Sigmoid colon (tissue), 7 donors: ENCODE measurements at regions of chr10 and their contacts with region 1.

Region 1: GRCh38 chr10:63465293-63466143 is at the start of gene JMJD1C:
- DNase-seq: peak; percentile 88
- H3K4me3 ChIP-seq: peak within 1 kb of the TSS; percentile 54 to 86 (median 76)
- H3K27ac ChIP-seq: peak within 1 kb of the TSS; percentile 89 to 96 (median 92)
- H3K4me1 ChIP-seq: peaks cover 0 to 23% (median 19%) of the 10 kb centered on the region in 4 donors
- H3K27me3 ChIP-seq: no peaks in the 10 kb centered on the region
- CTCF ChIP-seq: no peak
- EP300 ChIP-seq: no peak
- POLR2A ChIP-seq: peak; percentile 22 to 25
- total RNA-seq, gene JMJD1C: 94.2 to 134 (median 121) TPM

Region 2: DNA sequence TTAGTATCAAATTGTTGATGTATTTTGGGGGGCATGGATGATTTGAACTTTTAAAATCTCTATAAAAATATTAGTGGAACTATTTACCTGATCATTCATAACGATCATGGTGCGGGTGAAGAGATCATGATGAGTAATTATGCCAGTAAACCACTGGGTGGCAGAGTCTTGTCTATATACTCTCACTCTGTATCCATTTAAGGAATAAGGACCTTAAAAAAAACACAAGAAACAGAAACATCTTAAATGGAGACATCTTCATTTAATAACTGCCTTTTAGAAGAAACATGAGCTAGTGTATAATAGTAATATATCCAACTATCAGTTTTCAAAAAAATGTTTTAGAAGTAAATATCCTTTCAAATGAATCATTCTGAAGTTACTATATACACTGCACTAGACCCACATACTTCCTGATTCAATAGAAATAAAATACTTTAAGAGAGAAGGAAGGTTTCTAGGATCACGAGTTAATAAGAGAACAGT is 248.4 kb before region 1 on chr10:
- intact Hi-C with region 1: loop called (anchors 5 kb)
- DNase-seq: no peak
- H3K4me3 ChIP-seq: no peak overlapping the region
- H3K27ac ChIP-seq: peak overlapping the region in 3 of 4 donors; percentile 12 to 56 (median 56)
- H3K4me1 ChIP-seq: peaks cover 0 to 30% (median 13%) of the 10 kb centered on the region in 4 donors
- H3K27me3 ChIP-seq: no peaks in the 10 kb centered on the region
- CTCF ChIP-seq: peak; percentile 35 to 76 (median 68)
- EP300 ChIP-seq: no peak
- POLR2A ChIP-seq: no peak

Region 3: DNA sequence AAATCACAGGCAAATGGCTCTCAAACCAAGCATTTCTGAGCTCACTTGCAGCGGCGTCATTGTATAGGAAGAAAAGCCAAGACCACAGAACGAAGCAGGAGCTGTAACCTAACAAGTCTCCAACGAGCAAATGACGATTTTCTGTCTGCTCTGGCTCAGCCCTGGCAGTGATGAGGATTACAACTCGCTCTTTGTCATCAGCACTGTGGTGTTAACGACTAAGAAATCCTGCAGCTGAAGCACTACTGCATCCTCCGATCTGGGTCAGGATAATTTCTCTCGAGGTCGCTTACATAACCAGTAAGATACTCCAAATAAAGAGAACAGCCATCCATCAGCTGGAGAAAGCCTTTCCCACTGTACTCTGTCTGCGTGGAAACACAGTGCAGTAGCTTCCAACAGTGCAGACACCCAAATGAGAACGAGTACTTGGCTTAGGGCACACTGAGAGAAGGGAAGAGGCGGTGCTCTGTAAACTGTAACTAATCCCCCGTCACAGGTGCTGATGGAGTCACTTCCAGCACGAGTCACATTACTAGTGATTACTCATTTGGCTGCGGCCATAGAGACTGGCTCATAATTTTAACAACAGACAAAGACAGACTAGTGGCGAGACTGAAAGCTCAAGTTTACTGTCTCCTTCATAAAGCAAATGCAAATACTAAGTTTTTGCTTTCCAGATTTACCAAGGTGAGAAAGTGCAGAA is 196.6 kb before region 1 on chr10:
- intact Hi-C with region 1: loop called (anchors 5 kb)
- DNase-seq: peak; percentile 95
- H3K4me3 ChIP-seq: peak overlapping the region; percentile 38 to 55 (median 52)
- H3K27ac ChIP-seq: peak overlapping the region; percentile 83 to 91 (median 90)
- H3K4me1 ChIP-seq: peaks cover 0 to 35% (median 19%) of the 10 kb centered on the region in 4 donors
- H3K27me3 ChIP-seq: no peaks in the 10 kb centered on the region
- CTCF ChIP-seq: peak in 2 of 4 experiments; percentile 14 to 44
- EP300 ChIP-seq: peak in 3 of 4 donors; percentile 49 to 92 (median 56)
- POLR2A ChIP-seq: peak; percentile 70 to 89

Region 4: GRCh38 chr10:63521416-63522276 is 56.1 kb after region 1 on chr10:
- intact Hi-C with region 1: loop called (anchors 2 kb)
- DNase-seq: peak; percentile 88
- H3K4me3 ChIP-seq: peak overlapping the region; percentile 80 to 92 (median 86)
- H3K27ac ChIP-seq: peak overlapping the region; percentile 98 to 100 (median 98)
- H3K4me1 ChIP-seq: peaks cover 0 to 80% (median 52%) of the 10 kb centered on the region in 4 donors
- H3K27me3 ChIP-seq: no peaks in the 10 kb centered on the region
- CTCF ChIP-seq: no peak
- EP300 ChIP-seq: no peak
- POLR2A ChIP-seq: peak in 1 of 2 donors; percentile 59

Region 5: GRCh38 chr10:63711867-63712716 is 246.6 kb after region 1 on chr10:
- intact Hi-C with region 1: loop called (anchors 5 kb)
- DNase-seq: peak; percentile 98
- H3K4me3 ChIP-seq: no peak overlapping the region
- H3K27ac ChIP-seq: peak overlapping the region; percentile 80 to 94 (median 84)
- H3K4me1 ChIP-seq: peaks cover 0 to 53% (median 47%) of the 10 kb centered on the region in 4 donors
- H3K27me3 ChIP-seq: no peaks in the 10 kb centered on the region
- CTCF ChIP-seq: no peak
- EP300 ChIP-seq: peak; percentile 27 to 83 (median 41)
- POLR2A ChIP-seq: no peak